ENCODE measurements at regions of chr14 and their contacts with region 1.

Region 1: GRCh38 chr14:61461808-61462275 is 140.5 kb downstream of the PRKCH start:
- DNase-seq: no peak

Region 2: GRCh38 chr14:61561657-61562276 is 99.9 kb after region 1 on chr14:
- intact Hi-C with region 1: no loop called
- DNase-seq: peak; percentile 89

Region 3: GRCh38 chr14:61730756-61731373 is 269.0 kb after region 1 on chr14:
- intact Hi-C with region 1: loop called (anchors 5 kb)
- DNase-seq: no peak

Region 4: GRCh38 chr14:61750708-61751474 is 289.0 kb after region 1 on chr14:
- intact Hi-C with region 1: loop called (anchors 5 kb)
- DNase-seq: peak; percentile 97

Region 5: DNA sequence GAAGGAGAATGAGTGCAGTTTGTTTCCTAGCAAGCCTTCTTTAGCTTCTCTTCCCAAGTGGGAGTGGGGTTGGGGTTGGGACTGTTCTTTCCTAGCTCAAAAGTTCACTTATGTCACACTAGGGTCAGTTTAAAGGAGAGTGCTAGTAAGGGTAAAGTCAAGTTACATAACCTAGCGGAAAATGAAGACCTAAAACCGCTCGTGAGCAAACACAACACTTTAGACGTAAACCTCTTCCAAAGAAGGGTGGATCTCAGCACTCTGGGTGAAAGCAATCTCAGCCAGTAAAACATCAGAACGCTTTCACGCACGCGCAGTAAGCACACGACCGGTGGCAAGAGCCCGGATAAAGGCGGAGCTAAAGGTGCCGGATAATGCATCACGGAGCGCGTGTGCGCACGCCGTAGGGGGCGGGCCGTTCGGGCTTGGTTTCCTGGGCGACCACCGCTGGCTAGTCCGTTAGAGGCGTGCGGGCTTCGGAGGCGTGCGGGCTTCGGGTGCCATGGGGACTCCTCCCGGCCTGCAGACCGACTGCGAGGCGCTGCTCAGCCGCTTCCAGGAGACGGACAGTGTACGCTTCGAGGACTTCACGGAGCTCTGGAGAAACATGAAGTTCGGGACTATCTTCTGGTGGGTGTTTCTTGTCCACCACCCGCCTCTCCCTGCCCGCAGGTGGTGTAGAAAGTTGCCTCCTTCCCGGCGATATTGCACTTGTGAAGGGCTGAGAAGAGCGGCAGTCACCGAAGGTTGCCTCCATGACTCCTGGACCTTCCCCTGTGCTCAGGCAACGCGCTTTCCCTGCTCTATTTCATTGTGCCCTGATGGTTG is 300.3 kb after region 1 on chr14 and contains the start of gene SNAPC1:
- intact Hi-C with region 1: loop called (anchors 2 kb)
- DNase-seq: peak; percentile 97
- total RNA-seq, gene SNAPC1: 5.0 TPM

Region 6: DNA sequence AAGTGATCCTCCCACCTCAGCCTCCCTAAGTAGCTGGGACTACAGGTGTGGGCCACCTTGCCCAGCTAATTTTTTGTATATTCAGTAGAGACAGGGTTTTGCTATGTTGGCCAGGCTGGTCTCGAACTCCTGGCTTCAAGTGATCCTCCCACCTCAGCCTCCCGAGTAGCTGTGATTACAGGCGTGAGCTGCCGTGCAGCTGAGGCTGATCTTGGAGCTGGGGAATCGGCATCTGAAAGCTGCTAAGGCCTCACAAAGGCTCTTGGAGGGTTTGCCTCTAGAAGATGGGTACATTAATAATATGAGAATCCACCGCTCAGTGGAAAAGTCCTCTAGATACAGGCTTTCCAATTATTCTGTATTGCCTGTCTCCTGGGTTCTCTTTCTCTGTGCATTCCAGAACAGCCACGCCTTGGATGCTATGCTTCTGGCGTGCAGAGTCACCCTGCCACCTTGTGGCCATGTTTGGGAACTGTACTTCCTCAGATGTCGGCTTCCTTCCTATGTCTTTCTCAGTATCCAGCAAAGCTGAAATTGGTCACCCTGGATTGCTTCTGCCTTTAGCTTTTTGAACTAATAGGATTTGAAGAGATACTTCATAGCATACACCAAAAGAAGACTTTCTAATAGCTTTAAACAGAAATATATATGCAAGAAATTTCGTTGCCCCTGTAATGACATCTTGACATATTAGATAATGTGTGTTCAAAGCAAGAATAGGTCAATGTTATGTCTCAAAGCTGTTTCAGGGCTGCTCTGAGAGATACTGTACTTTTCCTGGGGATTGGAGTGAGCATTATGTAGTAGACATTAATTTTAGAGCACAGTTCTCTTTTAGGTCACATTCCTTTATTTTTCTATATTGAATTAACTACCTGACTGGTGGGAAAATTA is 375.7 kb after region 1 on chr14:
- intact Hi-C with region 1: loop called (anchors 1 kb)
- DNase-seq: peak; percentile 89

Measured in cardiac septum (tissue), 1 donor.